ENCODE measurements at regions of chr4 and their contacts with region 1.

Region 1: DNA sequence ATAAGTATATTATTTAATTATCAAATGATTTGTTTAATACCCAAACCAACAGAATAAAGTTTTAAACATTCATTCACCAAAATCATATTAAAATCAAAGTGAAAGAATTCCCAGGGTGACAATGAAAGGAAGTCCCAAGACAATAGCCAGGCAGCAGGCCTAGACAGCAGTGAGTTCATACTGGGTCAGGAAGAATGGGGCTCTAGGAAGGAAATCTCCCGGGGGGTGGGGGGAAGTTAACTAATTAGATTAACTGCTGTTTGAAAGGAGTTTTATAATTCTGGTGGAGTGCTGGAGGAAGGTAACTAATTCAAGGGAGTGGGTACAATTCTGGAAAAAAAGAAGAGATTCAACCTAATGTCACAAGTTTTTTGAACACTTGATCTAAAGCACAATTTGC is 104.1 kb downstream of the ZAR1 start:
- DNase-seq: peak in 4 of 5 donors; percentile 42 to 72 (median 56)
- ATAC-seq: peak; percentile 74 to 97 (median 83)
- H3K4me3 ChIP-seq: no peak overlapping the region
- H3K27ac ChIP-seq: peak overlapping the region in 8 of 12 donors; percentile 0 to 66 (median 51)
- H3K4me1 ChIP-seq: peaks cover 0 to 33% (median 8%) of the 10 kb centered on the region in 12 donors
- H3K27me3 ChIP-seq: no peaks in the 10 kb centered on the region
- CTCF ChIP-seq: no peak
- POLR2A ChIP-seq: no peak

Region 2: GRCh38 chr4:48116582-48116981 is 477.6 kb before region 1 on chr4:
- intact Hi-C with region 1: no loop called
- DNase-seq: no peak
- ATAC-seq: no peak
- H3K4me3 ChIP-seq: no peak overlapping the region
- H3K27ac ChIP-seq: no peak overlapping the region
- H3K4me1 ChIP-seq: no peaks in the 10 kb centered on the region
- H3K27me3 ChIP-seq: no peaks in the 10 kb centered on the region
- CTCF ChIP-seq: no peak
- POLR2A ChIP-seq: no peak

Region 3: DNA sequence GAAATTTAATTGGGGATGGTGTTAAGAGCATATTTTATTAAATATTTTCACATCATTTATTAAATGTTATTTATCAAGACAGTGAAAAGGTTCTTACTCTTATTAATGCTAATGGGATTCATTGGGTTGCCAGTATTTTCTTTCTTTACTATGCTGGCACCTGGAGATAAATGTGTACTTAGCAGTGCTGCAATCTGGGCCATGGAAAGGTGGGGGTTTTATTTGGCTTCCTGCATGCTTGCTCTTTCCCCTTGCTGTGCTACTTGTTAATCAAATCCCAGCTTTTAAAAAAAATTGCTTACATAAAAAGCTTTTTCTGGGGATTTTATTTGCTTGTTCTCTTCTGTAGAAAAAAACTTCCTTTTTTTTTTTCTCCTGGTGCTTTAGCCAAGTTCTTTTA is 55.8 kb before region 1 on chr4:
- intact Hi-C with region 1: no loop called
- DNase-seq: no peak
- ATAC-seq: no peak
- H3K4me3 ChIP-seq: no peak overlapping the region
- H3K27ac ChIP-seq: no peak overlapping the region
- H3K4me1 ChIP-seq: peaks cover 0 to 10% (median 0%) of the 10 kb centered on the region in 12 donors
- H3K27me3 ChIP-seq: no peaks in the 10 kb centered on the region
- CTCF ChIP-seq: no peak
- POLR2A ChIP-seq: no peak

Region 4: DNA sequence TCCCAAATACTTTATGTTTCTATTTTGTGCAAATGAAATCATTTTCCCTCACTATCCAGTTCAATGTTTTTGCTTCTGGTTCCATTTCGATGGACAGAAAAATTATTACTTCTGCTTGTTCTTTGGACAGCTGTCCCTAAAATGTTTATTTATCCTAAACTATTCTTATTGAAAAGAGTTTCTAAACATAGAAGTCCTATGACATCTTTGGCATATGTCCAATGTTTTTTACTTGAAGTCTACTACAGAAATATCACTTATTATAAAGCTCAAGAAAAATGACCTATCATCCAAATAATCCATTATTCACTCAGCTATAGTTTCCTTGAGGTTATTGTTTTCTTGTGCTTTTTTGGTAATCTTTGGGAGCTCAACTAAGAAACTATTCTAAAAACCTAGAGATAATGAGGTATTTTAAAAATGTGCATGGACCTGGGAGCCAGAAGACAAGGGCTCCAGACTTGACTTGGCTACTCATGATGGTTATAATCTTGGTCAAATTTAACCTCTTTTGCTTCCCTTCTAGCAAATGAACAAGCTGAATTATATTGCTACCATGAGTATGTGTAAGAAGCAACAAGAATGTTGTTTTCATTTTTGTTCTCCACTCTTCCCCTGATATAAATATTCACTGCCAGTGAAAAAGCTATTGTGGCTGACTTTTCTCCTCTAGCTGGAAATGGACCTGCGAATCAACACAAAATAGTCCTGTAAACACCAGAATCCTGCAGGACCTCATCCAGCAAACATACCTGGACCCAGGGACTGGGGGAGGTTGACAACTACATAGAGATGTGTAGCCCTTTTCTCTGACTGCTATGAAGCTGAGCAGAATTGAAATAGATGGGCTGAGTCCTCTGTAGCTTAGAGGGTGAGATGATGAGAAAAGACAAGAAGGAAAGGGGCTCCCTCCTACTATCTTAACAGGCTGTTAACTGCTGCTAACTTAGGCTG is 48.5 kb after region 1 on chr4:
- intact Hi-C with region 1: loop called in 1 of 10 experiments (anchors 5 kb)
- DNase-seq: no peak
- ATAC-seq: no peak
- H3K4me3 ChIP-seq: peak overlapping the region in 1 of 12 donors; percentile 4
- H3K27ac ChIP-seq: peak overlapping the region in 9 of 12 donors; percentile 8 to 56 (median 33)
- H3K4me1 ChIP-seq: peaks cover 9 to 43% (median 33%) of the 10 kb centered on the region in 12 donors
- H3K27me3 ChIP-seq: no peaks in the 10 kb centered on the region
- CTCF ChIP-seq: no peak
- POLR2A ChIP-seq: no peak

Region 5: DNA sequence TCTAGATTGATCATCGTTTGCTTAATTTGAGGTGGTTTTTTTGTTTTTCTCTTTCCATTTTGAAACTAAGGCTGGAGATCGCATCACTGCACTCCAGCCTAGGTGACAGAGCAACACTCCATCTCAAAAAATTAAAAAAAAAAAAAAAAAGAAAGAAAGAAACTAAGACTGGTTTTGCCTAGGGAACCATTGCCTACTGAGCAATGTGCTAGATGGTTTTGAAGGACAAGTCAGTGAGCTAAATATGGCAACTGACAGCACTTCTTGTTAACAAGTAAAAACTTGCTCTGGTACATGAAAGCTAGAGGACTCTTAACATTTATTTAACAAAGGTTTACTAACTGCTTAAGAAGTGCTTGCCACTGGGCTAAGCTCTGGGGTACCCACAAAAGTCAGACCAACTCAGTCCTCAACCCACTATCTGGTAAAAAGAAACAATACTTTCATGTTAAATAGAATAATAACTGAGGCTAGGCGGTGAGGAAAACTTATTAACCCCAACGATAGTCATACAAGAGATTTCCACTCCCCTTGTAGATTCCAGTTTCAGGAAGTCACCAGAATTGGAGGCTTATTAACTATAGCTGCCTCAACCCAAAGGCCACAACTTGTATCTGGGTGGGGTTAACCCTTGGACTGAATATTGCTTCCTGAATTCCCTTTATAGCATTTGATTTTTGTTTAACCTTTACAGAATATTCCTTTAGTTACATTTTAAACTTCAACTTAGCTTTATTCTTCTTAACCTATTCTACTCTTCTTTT is 74.3 kb after region 1 on chr4:
- intact Hi-C with region 1: loop called in 2 of 10 experiments (anchors 5 kb)
- DNase-seq: no peak
- ATAC-seq: peak; percentile 69 to 80 (median 73)
- H3K4me3 ChIP-seq: no peak overlapping the region
- H3K27ac ChIP-seq: peak overlapping the region; percentile 8 to 75 (median 58)
- H3K4me1 ChIP-seq: peaks cover 5 to 57% (median 40%) of the 10 kb centered on the region in 12 donors
- H3K27me3 ChIP-seq: no peaks in the 10 kb centered on the region
- CTCF ChIP-seq: no peak
- POLR2A ChIP-seq: no peak

Region 6: GRCh38 chr4:48673537-48673936 is 79.4 kb after region 1 on chr4:
- intact Hi-C with region 1: loop called in 2 of 10 experiments (anchors 5 kb)
- DNase-seq: no peak
- ATAC-seq: no peak
- H3K4me3 ChIP-seq: no peak overlapping the region
- H3K27ac ChIP-seq: no peak overlapping the region
- H3K4me1 ChIP-seq: peaks cover 0 to 19% (median 7%) of the 10 kb centered on the region in 12 donors
- H3K27me3 ChIP-seq: no peaks in the 10 kb centered on the region
- CTCF ChIP-seq: no peak
- POLR2A ChIP-seq: no peak

Region 7: DNA sequence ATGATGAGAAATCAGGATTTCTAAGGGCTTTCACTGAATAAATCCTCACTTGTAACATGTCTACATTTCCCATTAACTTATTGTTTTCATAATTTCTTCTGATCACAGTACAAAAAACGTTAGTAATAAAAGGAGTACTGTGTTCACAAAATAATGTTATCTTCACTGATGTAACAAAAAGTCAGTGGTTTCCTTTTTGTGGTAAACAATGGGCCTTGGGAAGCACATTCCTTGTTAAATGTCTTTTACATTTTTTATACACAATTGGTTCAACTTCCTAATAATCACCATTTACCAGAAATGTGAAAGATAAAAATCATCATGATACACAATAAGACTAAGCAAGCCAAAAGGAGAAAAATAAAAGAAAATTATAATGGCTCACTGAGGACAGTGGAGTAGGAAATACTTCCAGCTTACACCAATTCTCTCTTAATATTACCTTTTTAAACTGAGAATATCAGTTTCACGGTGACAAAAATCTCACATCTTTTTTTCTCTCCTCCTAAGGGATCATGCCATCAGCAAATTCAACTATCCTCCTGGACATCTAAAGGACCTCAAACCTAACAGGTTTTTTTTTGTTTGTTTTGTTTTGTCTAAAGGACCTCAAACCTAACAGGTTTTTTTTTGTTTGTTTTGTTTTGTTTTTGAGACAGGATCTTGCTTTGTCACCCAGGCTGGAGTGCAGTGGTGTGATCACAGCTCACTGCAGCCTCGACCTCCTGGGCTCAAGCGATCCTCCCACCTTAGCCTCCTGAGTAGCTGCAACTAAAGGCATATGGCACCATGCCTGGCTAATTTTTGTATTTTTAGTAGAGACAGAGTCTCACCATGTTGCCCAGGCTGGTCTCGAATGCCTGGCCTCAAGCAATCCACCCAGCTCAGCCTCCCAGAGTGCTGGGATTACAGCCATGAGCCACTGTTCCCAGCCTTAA is 128.6 kb after region 1 on chr4:
- intact Hi-C with region 1: loop called in 1 of 10 experiments (anchors 5 kb)
- DNase-seq: no peak
- ATAC-seq: peak in 3 of 4 donors; percentile 38 to 63 (median 47)
- H3K4me3 ChIP-seq: no peak overlapping the region
- H3K27ac ChIP-seq: peak overlapping the region in 10 of 12 donors; percentile 11 to 77 (median 57)
- H3K4me1 ChIP-seq: peaks cover 0 to 58% (median 23%) of the 10 kb centered on the region in 12 donors
- H3K27me3 ChIP-seq: no peaks in the 10 kb centered on the region
- CTCF ChIP-seq: no peak
- POLR2A ChIP-seq: no peak

Region 8: DNA sequence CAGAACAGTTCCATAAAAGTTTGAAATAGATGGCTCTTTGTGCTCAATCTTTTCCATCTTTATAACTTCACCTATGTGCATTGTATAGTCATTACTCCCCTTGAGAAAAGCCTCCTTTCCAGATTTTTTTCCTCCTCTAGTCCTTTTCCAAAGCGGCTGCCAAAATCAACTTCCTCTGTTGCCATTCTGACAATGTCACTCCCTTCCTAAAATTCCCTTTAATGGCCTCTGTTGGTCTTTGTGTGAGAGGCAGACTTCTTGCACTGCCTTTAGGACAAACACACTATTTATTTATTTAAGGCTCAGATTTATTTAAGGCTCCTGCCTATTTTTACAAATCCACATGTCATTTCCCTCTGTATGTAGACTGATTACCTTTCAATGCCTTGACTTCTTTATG is 207.6 kb after region 1 on chr4:
- intact Hi-C with region 1: no loop called
- DNase-seq: peak in 2 of 5 donors; percentile 56 to 66
- ATAC-seq: peak; percentile 58 to 88 (median 66)
- H3K4me3 ChIP-seq: peak overlapping the region in 1 of 12 donors; percentile 1
- H3K27ac ChIP-seq: peak overlapping the region in 10 of 12 donors; percentile 33 to 73 (median 64)
- H3K4me1 ChIP-seq: peaks cover 0 to 41% (median 19%) of the 10 kb centered on the region in 12 donors
- H3K27me3 ChIP-seq: no peaks in the 10 kb centered on the region
- CTCF ChIP-seq: no peak
- POLR2A ChIP-seq: no peak

Region 9: DNA sequence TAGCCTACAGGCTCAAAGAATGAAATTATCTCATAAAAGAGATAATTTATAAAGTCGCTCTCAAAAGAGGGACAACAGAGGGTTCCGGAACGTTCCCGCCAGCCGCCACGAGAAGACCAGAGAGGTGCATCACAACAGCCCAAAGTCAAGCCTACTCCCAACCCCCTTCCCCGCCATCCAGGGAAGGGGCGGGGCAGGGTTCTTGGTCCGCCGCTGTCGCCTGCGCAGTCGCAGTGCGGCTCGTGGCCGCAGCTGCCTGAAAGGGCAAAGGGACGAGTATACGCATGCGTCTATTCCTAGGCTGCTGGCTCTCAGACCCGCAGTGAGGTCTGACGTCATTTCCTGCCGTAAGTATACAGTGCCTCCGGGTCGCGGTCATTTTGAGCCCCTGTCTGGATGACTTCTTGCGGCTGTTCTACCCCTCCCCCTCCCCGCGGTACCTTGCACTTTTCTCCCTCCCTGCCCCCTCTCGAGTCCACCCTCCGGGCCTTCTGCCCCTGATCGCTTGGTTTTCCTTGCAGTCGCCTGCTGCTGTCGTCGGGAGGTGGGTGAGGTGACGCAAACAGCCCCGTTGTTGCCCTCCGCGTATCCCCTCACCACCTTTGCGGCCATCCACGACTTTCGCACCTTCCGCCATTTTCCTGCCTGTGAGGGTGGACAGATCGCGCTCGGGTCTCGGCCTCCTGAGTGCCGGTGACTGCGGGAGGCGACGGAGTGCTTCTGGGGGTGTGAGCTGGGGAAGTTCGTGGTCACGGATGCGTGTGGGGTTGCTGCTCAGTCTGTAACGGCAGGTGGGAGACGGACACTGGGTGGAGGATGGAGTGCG is 236.7 kb after region 1 on chr4 and contains the start of gene OCIAD1:
- intact Hi-C with region 1: loop called in 3 of 10 experiments (anchors 5 to 10 kb)
- DNase-seq: peak; percentile 96 to 99 (median 98)
- ATAC-seq: peak; percentile 100
- H3K4me3 ChIP-seq: peak within 1 kb of the TSS; percentile 68 to 96 (median 80)
- H3K27ac ChIP-seq: peak within 1 kb of the TSS; percentile 88 to 97 (median 95)
- H3K4me1 ChIP-seq: peaks cover 0 to 26% (median 16%) of the 10 kb centered on the region in 12 donors
- H3K27me3 ChIP-seq: no peaks in the 10 kb centered on the region
- CTCF ChIP-seq: no peak
- POLR2A ChIP-seq: peak in 1 of 2 donors; percentile 65
- total RNA-seq, gene OCIAD1: 102 to 175 (median 137) TPM